ENCODE measurements at regions of chr6 and their contacts with region 1.

Region 1: GRCh38 chr6:89371849-89372505 is 19.5 kb upstream of the UBE2J1 start:
- DNase-seq: peak; percentile 74
- H3K4me3 ChIP-seq: no peak overlapping the region; a peak in 1 of 4 replicates
- H3K27ac ChIP-seq: no peak overlapping the region
- H3K4me1 ChIP-seq: peaks cover 0 to 8% of the 10 kb centered on the region in 2 experiments; a peak in 2 of 4 replicates
- H3K27me3 ChIP-seq: no peaks in the 10 kb centered on the region
- CTCF ChIP-seq: peak; percentile 89
- EP300 ChIP-seq: peak in 1 of 2 experiments; percentile 31; a peak in 1 of 4 replicates
- RAD21 ChIP-seq: peak; percentile 79

Region 2: GRCh38 chr6:89022798-89023197 is 349.2 kb before region 1 on chr6:
- CTCF ChIA-PET with region 1: no interaction called
- POLR2A ChIA-PET with region 1: no interaction called
- DNase-seq: no peak
- H3K4me3 ChIP-seq: no peak overlapping the region
- H3K27ac ChIP-seq: no peak overlapping the region; a peak in 1 of 4 replicates
- H3K4me1 ChIP-seq: no peaks in the 10 kb centered on the region
- H3K27me3 ChIP-seq: no peaks in the 10 kb centered on the region
- CTCF ChIP-seq: no peak
- EP300 ChIP-seq: peak in 1 of 2 experiments; percentile 59; a peak in 1 of 4 replicates
- RAD21 ChIP-seq: no peak

Region 3: GRCh38 chr6:89352278-89353117 is 19.5 kb before region 1 on chr6 and contains the start of gene UBE2J1:
- CTCF ChIA-PET with region 1: interaction called, 34 read pairs
- POLR2A ChIA-PET with region 1: interaction called, 3 read pairs
- DNase-seq: peak; percentile 95
- H3K4me3 ChIP-seq: peak within 1 kb of the TSS; percentile 87 to 89
- H3K27ac ChIP-seq: peak within 1 kb of the TSS; percentile 93
- H3K4me1 ChIP-seq: peaks cover 16 to 26% of the 10 kb centered on the region in 2 experiments
- H3K27me3 ChIP-seq: no peaks in the 10 kb centered on the region
- CTCF ChIP-seq: peak; percentile 4; the same call in 1 of the 2 replicates
- EP300 ChIP-seq: no peak
- RAD21 ChIP-seq: no peak
- polyA plus RNA-seq, gene UBE2J1: 11.3 and 16.2 TPM in 2 replicates

Region 4: DNA sequence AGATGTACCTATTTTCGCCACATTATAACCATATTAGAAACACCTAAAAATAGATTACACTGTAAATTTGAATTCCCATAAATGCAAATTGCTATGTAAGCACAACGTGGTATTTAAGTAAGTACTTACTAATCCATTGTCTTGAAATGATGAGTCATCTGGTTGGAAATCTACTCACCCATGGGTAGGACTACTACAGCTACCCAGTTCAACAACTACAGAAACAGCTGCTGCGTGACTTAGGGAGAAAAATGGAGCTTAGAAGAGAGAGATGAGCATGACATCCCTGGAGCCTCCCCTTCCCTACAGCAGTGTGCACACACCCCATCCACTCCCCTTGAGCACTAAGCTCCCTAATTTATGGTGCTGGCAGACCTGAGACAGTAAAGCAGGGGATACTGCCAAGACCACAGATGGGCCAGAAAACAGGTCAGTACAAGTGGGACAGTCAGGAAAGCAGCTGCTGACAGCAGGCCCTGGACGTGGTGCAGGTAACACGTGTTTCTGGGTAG is 13.2 kb after region 1 on chr6:
- CTCF ChIA-PET with region 1: interaction called, 16 read pairs
- POLR2A ChIA-PET with region 1: no interaction called
- DNase-seq: no peak
- H3K4me3 ChIP-seq: no peak overlapping the region
- H3K27ac ChIP-seq: no peak overlapping the region
- H3K4me1 ChIP-seq: no peaks in the 10 kb centered on the region; a peak in 1 of 4 replicates
- H3K27me3 ChIP-seq: no peaks in the 10 kb centered on the region; the same call in 1 of the 2 replicates
- CTCF ChIP-seq: no peak
- EP300 ChIP-seq: no peak
- RAD21 ChIP-seq: no peak

Region 5: DNA sequence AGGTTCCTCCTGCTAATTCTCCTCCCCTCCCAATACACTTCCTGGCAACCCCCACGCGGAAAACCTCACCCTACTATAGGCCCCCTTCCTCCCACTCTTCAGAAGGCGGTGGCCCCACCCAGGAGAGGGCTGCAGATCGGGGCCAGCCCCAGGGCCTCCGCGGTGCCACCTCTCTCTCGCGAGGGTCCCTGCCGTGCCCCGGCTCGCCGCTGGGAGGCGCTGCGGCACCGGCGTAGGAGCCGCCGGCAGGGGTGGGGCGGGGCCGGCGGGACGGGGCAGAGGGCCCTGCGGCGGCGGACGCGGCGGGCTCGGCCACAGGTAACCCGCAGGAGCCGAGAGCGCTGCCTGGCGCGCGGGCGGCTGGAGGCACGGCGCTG is 60.9 kb after region 1 on chr6 and contains the start of gene ANKRD6:
- CTCF ChIA-PET with region 1: interaction called, 15 read pairs
- POLR2A ChIA-PET with region 1: no interaction called
- DNase-seq: peak; percentile 95
- H3K4me3 ChIP-seq: peak within 1 kb of the TSS; percentile 70 to 71
- H3K27ac ChIP-seq: no peak within 1 kb of the TSS; a peak in 1 of 4 replicates
- H3K4me1 ChIP-seq: peaks cover 7 to 9% of the 10 kb centered on the region in 2 experiments; a peak in 2 of 4 replicates
- H3K27me3 ChIP-seq: no peaks in the 10 kb centered on the region
- CTCF ChIP-seq: peak; percentile 68
- EP300 ChIP-seq: no peak
- RAD21 ChIP-seq: peak; percentile 83
- polyA plus RNA-seq, gene ANKRD6: 2.0 and 2.6 TPM in 2 replicates

Region 6: DNA sequence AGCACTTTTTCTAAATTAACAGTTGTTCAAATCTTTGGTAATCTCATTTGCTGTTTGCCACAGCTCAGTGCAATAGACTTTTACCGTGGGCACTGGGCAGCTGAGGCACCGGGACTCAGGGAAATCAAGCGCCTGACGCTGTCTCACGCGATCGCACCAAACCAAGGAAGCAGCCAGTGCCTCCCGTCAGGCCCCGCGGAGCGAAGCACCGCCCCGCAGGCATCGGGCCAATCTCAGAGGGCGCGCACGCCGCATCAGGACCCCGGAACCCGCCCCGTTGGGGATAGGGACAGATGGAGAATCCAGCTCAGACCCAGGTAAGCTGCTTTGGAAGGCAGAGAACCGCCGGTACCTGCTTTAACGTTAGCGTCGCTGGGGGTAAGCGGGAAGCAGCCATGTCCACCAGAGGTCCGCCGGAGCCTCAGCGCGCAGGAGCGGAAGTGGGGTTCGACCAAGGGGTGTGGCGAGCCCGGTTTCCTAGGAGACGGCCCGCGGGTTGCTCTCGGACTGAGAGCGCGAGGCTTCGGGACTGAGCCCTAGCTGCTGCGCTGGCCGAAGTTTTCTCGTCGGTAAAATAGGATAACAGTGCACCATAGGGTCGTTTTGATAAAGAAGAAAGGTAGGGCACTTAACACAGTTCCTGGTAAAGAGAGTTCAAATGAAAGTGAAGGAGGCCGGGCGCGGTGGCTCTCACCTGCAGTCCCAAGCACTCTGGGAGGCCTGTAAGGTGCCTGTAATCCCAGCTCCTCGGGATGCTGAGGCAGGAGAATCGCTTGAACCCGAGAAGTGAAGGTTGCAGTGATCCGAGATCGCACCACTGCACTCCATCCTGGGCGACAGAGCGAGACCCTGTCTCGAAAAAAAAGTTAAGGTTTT is 266.6 kb after region 1 on chr6 and contains the start of gene LYRM2:
- CTCF ChIA-PET with region 1: interaction called, 14 read pairs
- POLR2A ChIA-PET with region 1: interaction called, 4 read pairs
- DNase-seq: peak; percentile 93
- H3K4me3 ChIP-seq: peak within 1 kb of the TSS; percentile 63 to 94
- H3K27ac ChIP-seq: peak within 1 kb of the TSS; percentile 81 to 86
- H3K4me1 ChIP-seq: peaks cover 6% of the 10 kb centered on the region in 2 experiments; a peak in 2 of 4 replicates
- H3K27me3 ChIP-seq: no peaks in the 10 kb centered on the region
- CTCF ChIP-seq: no peak
- EP300 ChIP-seq: no peak
- RAD21 ChIP-seq: no peak
- polyA plus RNA-seq, gene LYRM2: 14.5 and 23.5 TPM in 2 replicates

Region 7: DNA sequence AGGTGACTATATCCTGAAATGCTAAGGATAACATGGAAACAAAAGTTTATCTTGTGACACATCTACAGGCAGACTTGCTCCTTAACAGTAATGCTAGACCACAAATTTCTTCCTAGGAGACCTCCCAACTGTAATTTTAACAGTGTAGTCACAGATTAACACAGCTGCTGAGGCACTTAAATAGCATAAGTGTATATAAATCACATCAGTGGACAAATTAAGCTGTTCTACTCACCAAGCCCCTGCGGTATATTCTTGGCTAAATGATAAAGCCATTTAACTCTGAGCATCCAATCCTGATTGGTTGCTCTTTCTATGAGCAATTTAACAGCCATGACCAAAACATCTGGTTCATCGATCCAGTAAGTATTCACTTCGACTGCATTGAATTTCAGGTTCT is 339.8 kb after region 1 on chr6:
- CTCF ChIA-PET with region 1: no interaction called
- POLR2A ChIA-PET with region 1: no interaction called
- DNase-seq: no peak
- H3K4me3 ChIP-seq: no peak overlapping the region
- H3K27ac ChIP-seq: no peak overlapping the region
- H3K4me1 ChIP-seq: no peaks in the 10 kb centered on the region
- H3K27me3 ChIP-seq: no peaks in the 10 kb centered on the region
- CTCF ChIP-seq: no peak
- EP300 ChIP-seq: no peak
- RAD21 ChIP-seq: no peak

Measured in SK-N-SH (cell line).